Naive thymus-derived CD4-positive, alpha-beta T cell (primary cell): ENCODE measurements at regions of chr11 and their contacts with region 1.

Region 1: GRCh38 chr11:6505577-6506240 is 8.6 kb downstream of the DNHD1 start:
- DNase-seq: peak in 5 of 9 donors; percentile 20 to 45 (median 31)
- ATAC-seq: peak; percentile 83
- H3K4me3 ChIP-seq: no peak overlapping the region
- H3K4me3 Mint-ChIP-seq: no peak overlapping the region
- H3K27ac ChIP-seq: no peak overlapping the region
- H3K27ac Mint-ChIP-seq: peak overlapping the region in 1 of 9 donors; percentile 8
- H3K4me1 ChIP-seq: no peaks in the 10 kb centered on the region
- H3K4me1 Mint-ChIP-seq: peaks cover 4 to 12% (median 6%) of the 10 kb centered on the region in 7 donors
- H3K27me3 ChIP-seq: no peaks in the 10 kb centered on the region
- H3K27me3 Mint-ChIP-seq: no peaks in the 10 kb centered on the region

Region 2: GRCh38 chr11:5304046-5304445 is 1201.7 kb before region 1 on chr11:
- CTCF ChIA-PET with region 1: no interaction called
- POLR2A ChIA-PET with region 1: no interaction called
- intact Hi-C with region 1: no loop called
- DNase-seq: no peak
- ATAC-seq: no peak
- H3K4me3 ChIP-seq: no peak overlapping the region
- H3K4me3 Mint-ChIP-seq: no peak overlapping the region
- H3K27ac ChIP-seq: no peak overlapping the region
- H3K27ac Mint-ChIP-seq: no peak overlapping the region
- H3K4me1 ChIP-seq: no peaks in the 10 kb centered on the region
- H3K4me1 Mint-ChIP-seq: peaks cover 0 to 2% (median 0%) of the 10 kb centered on the region in 7 donors
- H3K27me3 ChIP-seq: no peaks in the 10 kb centered on the region
- H3K27me3 Mint-ChIP-seq: peaks cover 0 to 19% (median 6%) of the 10 kb centered on the region in 5 donors

Region 3: GRCh38 chr11:6022956-6023355 is 482.8 kb before region 1 on chr11:
- CTCF ChIA-PET with region 1: no interaction called
- POLR2A ChIA-PET with region 1: no interaction called
- intact Hi-C with region 1: loop called in 1 of 2 experiments (anchors 2 kb)
- DNase-seq: peak in 5 of 9 donors; percentile 10 to 31 (median 24)
- ATAC-seq: peak; percentile 75
- H3K4me3 ChIP-seq: no peak overlapping the region
- H3K4me3 Mint-ChIP-seq: no peak overlapping the region
- H3K27ac ChIP-seq: no peak overlapping the region
- H3K27ac Mint-ChIP-seq: no peak overlapping the region
- H3K4me1 ChIP-seq: no peaks in the 10 kb centered on the region
- H3K4me1 Mint-ChIP-seq: no peaks in the 10 kb centered on the region
- H3K27me3 ChIP-seq: no peaks in the 10 kb centered on the region
- H3K27me3 Mint-ChIP-seq: peaks cover 30 to 50% (median 35%) of the 10 kb centered on the region in 5 donors

Region 4: GRCh38 chr11:6251120-6251733 is 254.5 kb before region 1 on chr11:
- CTCF ChIA-PET with region 1: no interaction called
- POLR2A ChIA-PET with region 1: no interaction called
- intact Hi-C with region 1: loop called in 1 of 2 experiments (anchors 1 kb)
- DNase-seq: peak in 5 of 9 donors; percentile 21 to 51 (median 27)
- ATAC-seq: peak; percentile 71
- H3K4me3 ChIP-seq: no peak overlapping the region
- H3K4me3 Mint-ChIP-seq: no peak overlapping the region
- H3K27ac ChIP-seq: no peak overlapping the region
- H3K27ac Mint-ChIP-seq: no peak overlapping the region
- H3K4me1 ChIP-seq: no peaks in the 10 kb centered on the region
- H3K4me1 Mint-ChIP-seq: no peaks in the 10 kb centered on the region
- H3K27me3 ChIP-seq: no peaks in the 10 kb centered on the region
- H3K27me3 Mint-ChIP-seq: peaks cover 0 to 17% (median 0%) of the 10 kb centered on the region in 5 donors

Region 5: DNA sequence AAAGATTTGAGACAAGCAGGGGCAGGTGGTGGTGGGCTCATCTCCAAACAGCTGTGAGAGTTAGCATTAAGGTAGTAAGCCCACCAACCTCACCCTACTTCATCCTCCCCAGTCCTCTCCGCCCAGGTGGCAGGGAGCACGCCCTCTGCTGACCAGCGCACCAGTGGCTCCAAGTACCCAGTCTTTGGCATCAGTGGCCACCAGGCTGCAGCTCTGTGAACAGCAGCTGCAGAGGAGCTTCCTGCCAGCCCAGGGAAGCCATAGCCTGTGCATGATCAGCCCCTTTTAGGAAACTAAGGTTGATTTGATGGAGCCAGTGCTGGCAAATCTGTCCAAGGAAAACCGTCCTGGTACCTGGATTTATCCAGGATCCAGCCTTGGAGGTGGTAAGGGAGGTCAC is 207.1 kb before region 1 on chr11:
- CTCF ChIA-PET with region 1: no interaction called
- POLR2A ChIA-PET with region 1: no interaction called
- intact Hi-C with region 1: loop called in 1 of 2 experiments (anchors 5 kb)
- DNase-seq: no peak
- ATAC-seq: no peak
- H3K4me3 ChIP-seq: no peak overlapping the region
- H3K4me3 Mint-ChIP-seq: no peak overlapping the region
- H3K27ac ChIP-seq: no peak overlapping the region
- H3K27ac Mint-ChIP-seq: no peak overlapping the region
- H3K4me1 ChIP-seq: no peaks in the 10 kb centered on the region
- H3K4me1 Mint-ChIP-seq: no peaks in the 10 kb centered on the region
- H3K27me3 ChIP-seq: no peaks in the 10 kb centered on the region
- H3K27me3 Mint-ChIP-seq: peaks cover 8 to 30% (median 20%) of the 10 kb centered on the region in 5 donors

Region 6: GRCh38 chr11:6489306-6489705 is 16.4 kb before region 1 on chr11:
- CTCF ChIA-PET with region 1: interaction called, 12 read pairs
- POLR2A ChIA-PET with region 1: interaction called, 4 read pairs
- intact Hi-C with region 1: no loop called
- DNase-seq: no peak
- ATAC-seq: no peak
- H3K4me3 ChIP-seq: no peak overlapping the region
- H3K4me3 Mint-ChIP-seq: no peak overlapping the region
- H3K27ac ChIP-seq: no peak overlapping the region
- H3K27ac Mint-ChIP-seq: peak overlapping the region in 4 of 9 donors; percentile 2 to 53 (median 38)
- H3K4me1 ChIP-seq: no peaks in the 10 kb centered on the region
- H3K4me1 Mint-ChIP-seq: peaks cover 0 to 32% (median 14%) of the 10 kb centered on the region in 7 donors
- H3K27me3 ChIP-seq: no peaks in the 10 kb centered on the region
- H3K27me3 Mint-ChIP-seq: no peaks in the 10 kb centered on the region

Region 7: DNA sequence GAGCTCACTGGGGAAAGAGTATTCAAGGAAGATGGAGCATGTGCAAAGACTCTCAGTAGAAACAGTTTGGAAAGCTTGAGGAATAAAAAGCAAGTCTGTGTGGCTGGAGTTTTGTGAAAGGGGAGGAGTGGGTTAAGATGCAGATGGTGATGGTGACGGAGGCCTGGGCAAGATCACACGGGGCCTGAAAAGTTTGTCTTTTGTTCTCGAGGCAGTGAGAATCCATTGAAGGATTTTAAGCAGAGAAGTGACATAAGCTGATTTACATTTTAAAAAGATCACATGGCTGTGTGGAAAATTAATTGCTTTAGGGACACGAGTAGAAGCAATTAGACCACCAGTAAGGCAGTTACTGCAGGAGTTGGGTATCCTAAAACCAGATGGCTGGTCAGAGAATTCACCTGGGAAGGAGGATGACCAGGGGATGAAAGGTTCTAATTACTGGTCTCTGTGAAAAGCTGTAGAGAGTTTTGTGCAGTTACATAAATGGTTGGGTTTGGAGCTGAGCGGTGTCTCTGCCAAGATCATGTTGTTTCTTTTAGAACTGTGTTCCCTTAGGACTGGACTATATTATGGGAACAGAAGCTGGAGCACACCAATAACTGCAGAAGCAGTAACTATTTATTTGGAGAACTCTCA is 90.6 kb after region 1 on chr11:
- CTCF ChIA-PET with region 1: no interaction called
- POLR2A ChIA-PET with region 1: no interaction called
- intact Hi-C with region 1: no loop called
- DNase-seq: no peak
- ATAC-seq: no peak
- H3K4me3 ChIP-seq: no peak overlapping the region
- H3K4me3 Mint-ChIP-seq: no peak overlapping the region
- H3K27ac ChIP-seq: no peak overlapping the region
- H3K27ac Mint-ChIP-seq: peak overlapping the region in 6 of 9 donors; percentile 3 to 44 (median 30)
- H3K4me1 ChIP-seq: peaks cover 0 to 3% of the 10 kb centered on the region in 2 donors
- H3K4me1 Mint-ChIP-seq: peaks cover 26 to 59% (median 47%) of the 10 kb centered on the region in 7 donors
- H3K27me3 ChIP-seq: no peaks in the 10 kb centered on the region
- H3K27me3 Mint-ChIP-seq: no peaks in the 10 kb centered on the region

Region 8: DNA sequence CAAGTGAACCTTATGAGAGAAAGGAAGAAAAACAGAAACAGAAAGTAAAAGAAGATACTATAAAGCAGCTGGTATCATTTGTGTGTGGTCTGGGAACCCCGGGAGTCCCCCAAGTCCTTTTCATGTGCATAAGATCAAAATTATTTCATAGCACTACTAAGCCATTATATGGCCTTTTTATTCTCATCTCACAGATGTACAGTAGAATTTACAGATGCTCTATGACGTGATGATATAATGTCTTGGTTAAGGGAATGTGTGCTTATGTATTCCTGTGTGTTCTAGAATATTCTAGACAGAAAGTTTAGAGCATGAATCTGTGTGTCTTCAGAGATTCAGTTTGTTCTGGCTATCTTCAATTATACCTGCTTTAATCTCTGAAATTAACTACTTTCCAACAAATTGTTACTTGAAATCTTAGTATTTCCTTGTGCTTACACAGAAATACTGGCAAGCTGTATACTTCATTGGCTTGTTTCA is 122.1 kb after region 1 on chr11:
- CTCF ChIA-PET with region 1: no interaction called
- POLR2A ChIA-PET with region 1: no interaction called
- intact Hi-C with region 1: no loop called
- DNase-seq: peak in 5 of 9 donors; percentile 18 to 43 (median 32)
- ATAC-seq: peak; percentile 76
- H3K4me3 ChIP-seq: peak overlapping the region; percentile 32
- H3K4me3 Mint-ChIP-seq: peak overlapping the region; percentile 8 to 75 (median 50)
- H3K27ac ChIP-seq: peak overlapping the region; percentile 55
- H3K27ac Mint-ChIP-seq: peak overlapping the region; percentile 10 to 89 (median 63)
- H3K4me1 ChIP-seq: peaks cover 8% of the 10 kb centered on the region in 2 donors
- H3K4me1 Mint-ChIP-seq: peaks cover 11 to 29% (median 19%) of the 10 kb centered on the region in 7 donors
- H3K27me3 ChIP-seq: no peaks in the 10 kb centered on the region
- H3K27me3 Mint-ChIP-seq: no peaks in the 10 kb centered on the region